H1 (cell line): ENCODE measurements at regions of chr17 and their contacts with region 1.

Region 1: GRCh38 chr17:48718761-48719641 is 3.3 kb downstream of the PRAC1 start:
- DNase-seq: peak in 1 of 2 experiments; percentile 76
- H3K4me3 ChIP-seq: peak overlapping the region; percentile 6 to 49 (median 20); a peak in 5 of 8 replicates
- H3K27ac ChIP-seq: no peak overlapping the region
- H3K4me1 ChIP-seq: peaks cover 11 to 39% (median 21%) of the 10 kb centered on the region in 4 experiments; a peak in 6 of 7 replicates
- H3K27me3 ChIP-seq: peaks cover 65 to 94% (median 84%) of the 10 kb centered on the region in 4 experiments
- CTCF ChIP-seq: no peak
- EP300 ChIP-seq: no peak
- POLR2A ChIP-seq: no peak
- RAD21 ChIP-seq: no peak

Region 2: DNA sequence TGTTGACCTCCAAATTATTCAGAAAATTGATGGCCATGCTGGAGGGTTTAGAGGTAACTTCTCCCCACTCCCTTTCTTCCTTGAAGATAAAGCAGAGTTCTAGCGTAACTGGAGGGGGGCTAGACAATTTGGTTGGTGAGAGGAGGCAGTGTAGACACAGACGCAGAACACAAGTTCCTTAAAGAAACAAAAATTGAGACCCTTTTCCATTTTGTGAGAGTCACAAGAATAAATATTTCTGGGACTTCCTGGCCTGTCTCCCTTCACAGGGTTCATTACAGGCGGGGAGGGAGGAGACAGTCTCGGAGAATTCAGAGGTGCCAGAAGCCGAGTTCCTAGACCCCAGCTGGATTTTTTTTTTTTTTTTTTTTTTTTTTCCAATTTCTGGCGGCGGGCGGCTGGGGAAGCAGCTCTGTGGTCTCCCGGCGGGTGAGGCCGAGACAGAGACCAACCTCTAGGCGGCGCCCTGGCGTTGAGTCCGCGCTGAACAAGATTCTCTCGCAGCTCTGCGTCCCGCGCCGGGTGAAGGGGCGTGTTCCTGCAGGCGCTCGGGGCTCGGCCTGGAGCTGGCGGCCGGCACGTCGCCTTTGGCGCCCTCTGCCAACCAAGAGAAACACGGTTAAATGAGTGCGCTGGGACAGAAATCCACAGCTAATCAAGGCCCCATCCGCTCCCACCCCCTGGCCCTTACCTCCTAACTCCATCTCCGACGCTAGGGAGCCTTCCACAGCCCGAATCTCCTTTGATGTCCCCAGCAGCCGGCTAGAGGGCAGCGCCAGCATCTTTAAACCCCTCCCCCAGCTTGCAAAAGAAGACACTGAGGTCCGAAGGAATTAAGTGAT is 82.6 kb before region 1 on chr17:
- CTCF ChIA-PET with region 1: interaction called, 17 read pairs
- POLR2A ChIA-PET with region 1: no interaction called
- DNase-seq: peak; percentile 85 to 98
- H3K4me3 ChIP-seq: peak overlapping the region in 1 of 4 experiments; percentile 13; a peak in 1 of 8 replicates
- H3K27ac ChIP-seq: no peak overlapping the region
- H3K4me1 ChIP-seq: peaks cover 0 to 5% (median 1%) of the 10 kb centered on the region in 4 experiments; a peak in 3 of 7 replicates
- H3K27me3 ChIP-seq: peaks cover 98 to 100% (median 99%) of the 10 kb centered on the region in 4 experiments
- CTCF ChIP-seq: peak; percentile 77 to 82 (median 79)
- EP300 ChIP-seq: no peak
- POLR2A ChIP-seq: no peak
- RAD21 ChIP-seq: peak; percentile 34 to 48; a peak in 3 of 4 replicates

Region 3: GRCh38 chr17:48747445-48748363 is 28.7 kb after region 1 on chr17:
- CTCF ChIA-PET with region 1: interaction called, 44 read pairs
- POLR2A ChIA-PET with region 1: interaction called, 6 read pairs
- DNase-seq: peak in 1 of 2 experiments; percentile 64
- H3K4me3 ChIP-seq: peak overlapping the region in 1 of 4 experiments; percentile 10; a peak in 1 of 8 replicates
- H3K27ac ChIP-seq: no peak overlapping the region
- H3K4me1 ChIP-seq: peaks cover 3 to 7% (median 5%) of the 10 kb centered on the region in 4 experiments
- H3K27me3 ChIP-seq: peaks cover 93 to 100% (median 98%) of the 10 kb centered on the region in 4 experiments
- CTCF ChIP-seq: no peak
- EP300 ChIP-seq: no peak
- POLR2A ChIP-seq: no peak
- RAD21 ChIP-seq: no peak